Activated T-helper 1 cell treated with anti-CD3 and anti-CD28 coated beads, Interleukin-12 subunit alpha, Interleukin-12 subunit beta, Interleukin-2, Interleukin-4 antibody, amounts not matched to agents 30 ng/mL and 10 ng/mL and 1 ng/mL, durations not matched to agents 14 hours and 24 hours and 36 hours (primary cell): ENCODE measurements at regions of chr6 and their contacts with region 1.

Region 1: DNA sequence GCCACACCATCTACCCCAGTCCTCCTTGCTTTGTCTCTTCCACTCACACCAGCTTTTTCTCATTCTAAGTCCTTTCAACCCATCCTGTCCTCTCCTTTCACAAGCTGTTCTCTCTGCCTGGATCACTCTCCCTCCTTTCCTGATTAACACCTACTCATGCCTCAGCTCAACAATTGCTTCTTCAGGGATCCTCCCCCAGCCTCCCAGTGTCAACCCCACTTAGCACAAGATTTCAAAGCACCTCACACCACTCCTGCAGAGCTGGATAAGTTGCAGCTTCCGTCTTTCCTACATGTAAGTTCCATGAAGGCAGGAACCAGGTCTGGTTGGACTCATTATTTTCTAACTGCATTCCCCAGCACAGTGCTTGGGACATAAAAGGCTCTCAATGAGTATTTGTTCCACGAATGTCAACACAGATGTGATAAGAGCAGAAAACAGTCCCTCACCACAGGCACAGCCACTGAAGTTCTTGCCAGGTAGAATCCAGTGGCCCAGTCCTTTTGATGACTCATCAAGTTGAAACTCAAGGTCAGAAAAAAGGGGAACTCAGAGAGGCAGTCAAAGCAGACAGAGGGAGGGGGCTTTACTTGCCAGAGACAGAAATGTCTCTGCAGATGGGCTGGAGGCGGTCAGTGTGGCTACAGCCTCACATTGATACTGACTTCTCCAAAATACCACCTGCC is 193.4 kb upstream of the PRDM1 start:
- DNase-seq: no peak
- H3K4me3 Mint-ChIP-seq: peak overlapping the region; percentile 1
- H3K27ac Mint-ChIP-seq: peak overlapping the region; percentile 4
- H3K4me1 Mint-ChIP-seq: peaks cover 39% of the 10 kb centered on the region
- H3K27me3 Mint-ChIP-seq: no peaks in the 10 kb centered on the region

Region 2: DNA sequence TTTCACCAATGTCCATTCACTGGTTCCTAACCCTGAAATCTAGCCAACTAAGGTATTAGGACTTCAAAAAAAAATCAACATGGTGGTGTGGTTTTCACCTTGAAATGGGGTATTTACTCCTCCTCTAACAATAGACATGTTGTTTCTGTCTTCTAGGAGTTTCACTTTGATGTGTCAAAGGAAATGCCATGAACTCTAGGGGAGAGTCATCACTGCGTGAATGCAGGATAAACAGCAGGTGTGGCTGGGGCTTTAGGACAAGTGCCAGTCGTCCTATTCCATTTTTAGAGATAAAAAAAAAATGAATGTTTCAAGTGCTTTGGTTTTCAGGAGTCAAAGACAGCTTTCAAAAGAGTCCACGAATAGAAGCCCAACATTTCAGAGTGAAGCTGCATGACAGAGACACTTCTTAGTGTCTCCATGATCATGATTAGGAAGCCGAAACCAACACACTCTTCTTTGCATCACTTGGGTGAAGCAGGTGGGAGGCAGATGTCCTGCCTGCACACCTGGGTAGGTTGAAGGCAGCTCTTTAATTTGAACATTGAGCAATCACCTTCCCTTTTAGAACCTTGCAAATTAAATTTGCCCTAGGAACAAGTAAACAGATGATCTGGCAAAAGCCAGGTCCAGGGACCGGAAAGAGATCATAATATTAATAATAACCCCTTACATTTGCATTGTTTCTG is 135.1 kb before region 1 on chr6:
- intact Hi-C with region 1: loop called (anchors 2 kb)
- DNase-seq: peak; percentile 28
- H3K4me3 Mint-ChIP-seq: peak overlapping the region; percentile 64
- H3K27ac Mint-ChIP-seq: peak overlapping the region; percentile 77
- H3K4me1 Mint-ChIP-seq: peaks cover 61% of the 10 kb centered on the region
- H3K27me3 Mint-ChIP-seq: no peaks in the 10 kb centered on the region

Region 3: GRCh38 chr6:105935416-105935815 is 42.7 kb after region 1 on chr6:
- intact Hi-C with region 1: loop called (anchors 5 kb)
- DNase-seq: no peak
- H3K4me3 Mint-ChIP-seq: no peak overlapping the region
- H3K27ac Mint-ChIP-seq: no peak overlapping the region
- H3K4me1 Mint-ChIP-seq: no peaks in the 10 kb centered on the region
- H3K27me3 Mint-ChIP-seq: peaks cover 7% of the 10 kb centered on the region